Activated CD8-positive, alpha-beta memory T cell treated with anti-CD3 and anti-CD28 coated beads, Interleukin-2, amount 10 ng/mL, durations not matched to agents 7 days and 5 days (primary cell): ENCODE measurements at regions of chr22 and their contacts with region 1.

Region 1: GRCh38 chr22:22884010-22884887 is 3.4 kb upstream of the IGLL5 start:
- DNase-seq: peak; percentile 84
- ATAC-seq: peak; percentile 81
- H3K4me3 Mint-ChIP-seq: no peak overlapping the region
- H3K27ac Mint-ChIP-seq: no peak overlapping the region
- H3K4me1 Mint-ChIP-seq: peaks cover 20% of the 10 kb centered on the region
- H3K27me3 Mint-ChIP-seq: peaks cover 33% of the 10 kb centered on the region

Region 2: GRCh38 chr22:22745225-22746060 is 138.8 kb before region 1 on chr22:
- CTCF ChIA-PET with region 1: interaction called, 16 read pairs
- DNase-seq: peak; percentile 61
- ATAC-seq: peak; percentile 70
- H3K4me3 Mint-ChIP-seq: no peak overlapping the region
- H3K27ac Mint-ChIP-seq: no peak overlapping the region
- H3K4me1 Mint-ChIP-seq: peaks cover 11% of the 10 kb centered on the region
- H3K27me3 Mint-ChIP-seq: peaks cover 33% of the 10 kb centered on the region

Region 3: GRCh38 chr22:22770280-22770871 is 113.9 kb before region 1 on chr22:
- CTCF ChIA-PET with region 1: interaction called, 36 read pairs
- DNase-seq: peak; percentile 54
- ATAC-seq: peak; percentile 53
- H3K4me3 Mint-ChIP-seq: no peak overlapping the region
- H3K27ac Mint-ChIP-seq: no peak overlapping the region
- H3K4me1 Mint-ChIP-seq: peaks cover 3% of the 10 kb centered on the region
- H3K27me3 Mint-ChIP-seq: peaks cover 10% of the 10 kb centered on the region

Region 4: DNA sequence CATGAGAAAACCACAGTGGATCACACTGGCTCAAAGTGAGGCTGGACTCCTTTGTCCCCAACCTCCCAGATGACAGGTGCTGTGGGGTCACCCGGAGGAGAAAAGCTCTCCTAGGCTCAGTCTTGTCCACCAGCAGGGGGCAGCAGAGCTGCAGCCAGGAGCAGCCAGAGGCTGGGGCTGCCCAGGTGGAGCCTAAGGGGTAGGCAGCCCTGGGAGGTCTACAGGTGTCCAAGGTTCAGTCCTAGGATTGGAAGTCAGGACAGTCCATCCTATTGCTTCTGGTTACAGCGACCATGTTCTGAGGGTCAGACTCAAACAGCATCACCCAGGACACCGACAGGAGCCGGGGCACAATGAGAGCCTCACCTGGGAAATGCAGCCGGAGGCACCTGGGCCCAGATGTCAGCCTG is 74.2 kb before region 1 on chr22:
- CTCF ChIA-PET with region 1: interaction called, 355 read pairs
- DNase-seq: peak; percentile 84
- ATAC-seq: peak; percentile 98
- H3K4me3 Mint-ChIP-seq: no peak overlapping the region
- H3K27ac Mint-ChIP-seq: no peak overlapping the region
- H3K4me1 Mint-ChIP-seq: peaks cover 3% of the 10 kb centered on the region
- H3K27me3 Mint-ChIP-seq: peaks cover 17% of the 10 kb centered on the region

Region 5: DNA sequence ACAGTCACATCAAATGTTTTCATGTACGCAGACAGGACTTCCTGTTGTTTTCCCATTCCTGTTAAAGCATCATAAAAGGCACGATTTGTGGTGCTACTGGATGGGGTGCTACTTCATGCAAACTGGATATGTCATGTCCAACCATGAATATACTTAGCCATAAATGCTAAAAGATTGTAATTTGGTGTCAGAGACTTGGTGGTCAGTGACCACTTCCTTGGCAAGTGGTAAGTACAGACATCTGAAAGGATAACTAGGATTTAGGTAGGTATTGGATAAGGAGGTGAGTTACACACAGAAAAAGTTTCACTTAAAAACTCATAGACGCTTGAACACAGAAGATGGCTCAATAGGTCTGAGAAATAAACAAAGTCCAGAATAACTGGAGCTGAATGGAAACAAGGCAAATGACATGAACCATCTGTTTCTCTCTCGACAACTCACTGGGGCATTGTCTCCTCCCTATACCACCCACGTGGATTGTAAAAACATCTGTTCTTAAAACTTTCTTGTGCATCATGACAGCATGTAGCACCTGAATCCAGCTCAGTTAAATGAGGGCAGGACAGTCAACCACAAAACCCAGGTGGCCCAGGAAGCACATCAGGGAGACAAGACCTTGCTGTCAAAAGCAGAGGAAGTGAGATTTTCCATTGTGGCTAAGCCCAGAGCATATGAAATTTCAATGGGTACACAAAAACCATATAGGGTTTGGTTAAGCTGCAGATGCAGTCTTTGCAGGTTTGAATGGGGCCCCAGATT is 18.8 kb before region 1 on chr22:
- CTCF ChIA-PET with region 1: interaction called, 15 read pairs
- DNase-seq: peak; percentile 70
- ATAC-seq: peak; percentile 81
- H3K4me3 Mint-ChIP-seq: peak overlapping the region; percentile 4
- H3K27ac Mint-ChIP-seq: peak overlapping the region; percentile 42
- H3K4me1 Mint-ChIP-seq: peaks cover 30% of the 10 kb centered on the region
- H3K27me3 Mint-ChIP-seq: peaks cover 38% of the 10 kb centered on the region

Region 6: DNA sequence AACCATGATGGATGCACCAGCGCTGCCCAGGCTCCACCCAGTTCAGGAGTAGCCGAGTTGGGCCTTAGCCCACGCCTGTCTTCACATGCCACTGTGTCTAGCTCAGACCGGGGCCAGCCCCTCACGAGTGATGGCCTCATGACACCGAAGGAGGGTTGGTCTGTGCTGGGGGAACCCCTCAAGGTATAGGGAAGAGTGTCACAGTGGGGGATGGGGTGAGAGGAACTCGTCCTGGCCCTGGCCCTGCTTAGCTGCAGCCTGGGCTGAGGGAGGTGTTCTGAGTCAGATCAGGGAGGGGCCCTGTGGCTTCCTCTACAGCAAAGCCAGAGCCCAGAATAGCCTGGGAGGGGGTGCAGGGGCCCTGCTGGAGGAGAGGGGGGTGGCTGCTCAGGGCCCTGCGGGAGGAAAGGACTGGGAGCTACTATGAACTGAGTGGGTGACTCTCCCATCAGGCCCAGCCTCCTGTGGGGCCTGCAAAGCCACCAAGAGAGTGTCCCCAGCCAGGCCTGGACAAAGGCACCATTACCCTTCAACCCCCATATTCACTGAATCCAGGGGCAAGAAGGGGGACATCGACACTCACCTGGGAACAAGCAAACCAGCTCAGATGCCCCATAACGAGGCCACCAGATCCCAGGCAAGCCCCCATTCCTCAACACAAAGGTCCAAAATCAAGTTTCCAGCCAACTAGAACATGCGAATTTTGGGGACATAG is 44.6 kb after region 1 on chr22:
- CTCF ChIA-PET with region 1: interaction called, 10 read pairs
- DNase-seq: peak; percentile 87
- ATAC-seq: peak; percentile 97
- H3K4me3 Mint-ChIP-seq: no peak overlapping the region
- H3K27ac Mint-ChIP-seq: peak overlapping the region; percentile 74
- H3K4me1 Mint-ChIP-seq: peaks cover 32% of the 10 kb centered on the region
- H3K27me3 Mint-ChIP-seq: no peaks in the 10 kb centered on the region